H1 (cell line): ENCODE measurements at regions of chr14 and their contacts with region 1.

Region 1: DNA sequence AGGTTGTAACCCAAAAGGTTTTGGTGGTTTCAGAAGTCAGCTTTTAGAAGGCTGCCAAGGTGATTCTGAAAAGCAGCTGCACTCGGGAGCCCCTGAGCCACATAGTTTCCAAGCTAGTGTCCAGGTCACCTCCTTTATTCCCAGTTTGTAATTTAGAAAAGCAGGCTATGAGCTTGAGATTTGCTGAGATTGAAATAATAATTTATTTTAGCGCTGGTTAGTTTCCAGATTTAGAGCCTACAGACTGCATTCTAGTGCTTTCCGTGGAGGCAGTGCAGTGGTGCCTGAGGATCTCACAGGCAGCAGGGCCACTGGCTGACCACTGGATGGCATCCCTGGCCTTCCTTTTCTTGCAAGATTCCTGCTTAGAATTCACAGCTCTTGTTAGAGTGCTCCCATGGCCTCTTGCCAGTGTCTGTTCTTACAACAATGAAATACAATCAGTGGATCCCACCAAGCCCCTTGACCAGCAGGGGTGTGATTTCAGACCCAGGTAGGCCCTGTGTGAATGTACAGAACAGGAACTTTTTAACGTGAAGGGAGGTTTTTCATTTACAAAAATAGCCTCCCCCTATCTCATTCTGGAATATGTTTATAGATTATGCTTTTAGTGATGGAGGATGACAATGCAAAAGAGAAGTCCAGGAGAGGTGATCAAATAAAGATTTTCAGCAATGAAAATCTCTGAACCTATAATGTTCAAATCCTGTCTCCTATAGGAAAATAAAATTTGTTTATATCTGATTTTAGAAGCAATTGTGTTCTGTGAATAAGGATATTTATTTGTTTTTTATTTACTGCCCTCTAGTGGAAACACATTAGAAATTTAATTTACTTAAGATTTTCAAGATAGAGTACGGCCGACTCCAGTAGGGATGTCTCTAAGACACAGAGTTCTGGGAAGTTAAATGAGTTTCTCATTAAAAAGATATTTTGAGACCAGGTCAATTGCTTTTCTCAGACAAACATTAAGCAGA is 362.1 kb upstream of the STXBP6 start:
- DNase-seq: peak in 1 of 2 experiments; percentile 54
- H3K4me3 ChIP-seq: no peak overlapping the region
- H3K27ac ChIP-seq: no peak overlapping the region
- H3K4me1 ChIP-seq: no peaks in the 10 kb centered on the region
- H3K27me3 ChIP-seq: no peaks in the 10 kb centered on the region
- CTCF ChIP-seq: peak; percentile 71 to 86 (median 85)
- EP300 ChIP-seq: no peak
- POLR2A ChIP-seq: no peak
- RAD21 ChIP-seq: peak; percentile 76 to 85

Region 2: DNA sequence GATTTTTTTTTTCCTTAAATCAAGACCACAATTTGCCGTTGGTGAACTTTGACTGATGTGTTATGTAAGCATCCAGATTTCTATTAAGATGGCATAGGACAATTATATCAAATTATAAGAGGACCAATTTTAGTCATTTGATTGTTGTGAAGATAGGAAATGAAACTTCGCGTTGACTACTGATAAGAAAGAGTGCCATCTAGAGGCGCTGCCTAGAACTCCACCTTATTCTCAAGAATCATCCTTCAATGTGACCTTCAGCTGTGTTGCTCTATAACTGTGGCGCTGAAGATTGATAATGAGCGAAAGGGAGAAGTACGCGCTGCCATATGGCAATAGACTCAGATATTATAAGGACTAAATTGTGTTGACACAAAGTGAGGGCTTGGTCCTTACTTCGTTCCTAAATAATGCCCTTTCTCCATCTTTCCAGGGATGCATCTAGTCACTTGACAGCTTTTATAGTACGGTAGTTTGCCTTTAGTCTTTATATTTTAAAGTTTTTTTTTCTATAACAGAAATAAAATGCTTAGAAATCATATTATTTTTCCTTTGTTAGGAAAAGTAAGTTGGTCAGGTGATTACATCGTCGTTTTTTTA is 11.4 kb before region 1 on chr14:
- CTCF ChIA-PET with region 1: interaction called, 65 read pairs
- POLR2A ChIA-PET with region 1: no interaction called
- DNase-seq: peak in 1 of 2 experiments; percentile 72
- H3K4me3 ChIP-seq: no peak overlapping the region
- H3K27ac ChIP-seq: no peak overlapping the region
- H3K4me1 ChIP-seq: no peaks in the 10 kb centered on the region
- H3K27me3 ChIP-seq: no peaks in the 10 kb centered on the region
- CTCF ChIP-seq: peak in 2 of 3 experiments; percentile 54 to 70; a peak in 3 of 4 replicates
- EP300 ChIP-seq: no peak
- POLR2A ChIP-seq: no peak
- RAD21 ChIP-seq: peak; percentile 60 to 65

Region 3: DNA sequence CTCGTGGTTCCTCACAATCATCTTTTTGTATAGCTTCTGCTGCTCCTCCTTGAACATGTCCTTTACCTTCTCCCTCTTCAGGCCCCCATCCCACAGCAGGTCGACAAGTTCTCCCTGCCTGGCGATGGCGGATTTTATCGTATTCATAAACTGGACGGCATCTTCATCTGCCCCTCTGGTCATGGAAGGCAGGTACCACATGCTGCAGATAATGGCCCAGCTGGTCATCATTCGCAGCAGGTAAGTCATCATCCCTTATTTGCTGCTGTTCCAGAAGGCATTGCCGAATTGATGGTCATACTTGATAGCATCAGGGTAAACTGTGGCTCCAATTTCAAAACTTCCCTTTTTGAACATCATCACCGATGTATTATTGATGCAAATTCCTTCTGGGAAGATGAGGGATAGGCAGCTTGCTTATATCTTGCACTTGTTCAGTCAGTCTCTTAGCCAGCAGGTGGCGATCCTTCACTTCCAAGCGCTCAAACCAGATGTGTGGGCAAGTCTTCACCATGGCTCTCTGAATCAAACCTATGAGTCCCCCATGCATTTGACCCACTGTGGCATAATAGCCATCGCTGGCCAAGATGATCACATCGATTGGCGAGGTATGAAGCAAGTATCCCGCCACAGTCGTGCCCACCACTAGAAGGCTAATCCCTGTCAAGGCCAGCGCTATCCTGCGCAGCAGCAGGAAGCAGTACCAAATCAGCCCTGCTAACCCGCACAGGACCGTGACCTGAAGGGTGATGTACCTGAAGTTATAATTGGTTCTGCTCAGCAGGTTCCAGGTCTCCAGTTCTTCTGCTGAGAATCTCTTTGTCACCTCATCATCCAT is 19.4 kb after region 1 on chr14:
- CTCF ChIA-PET with region 1: interaction called, 15 read pairs
- POLR2A ChIA-PET with region 1: no interaction called
- DNase-seq: peak; percentile 15 to 65
- H3K4me3 ChIP-seq: no peak overlapping the region
- H3K27ac ChIP-seq: no peak overlapping the region
- H3K4me1 ChIP-seq: no peaks in the 10 kb centered on the region
- H3K27me3 ChIP-seq: no peaks in the 10 kb centered on the region
- CTCF ChIP-seq: peak; percentile 43 to 69 (median 61)
- EP300 ChIP-seq: no peak
- POLR2A ChIP-seq: no peak
- RAD21 ChIP-seq: peak; percentile 72 to 78

Region 4: GRCh38 chr14:25444381-25444780 is 32.3 kb after region 1 on chr14:
- CTCF ChIA-PET with region 1: no interaction called
- POLR2A ChIA-PET with region 1: no interaction called
- DNase-seq: no peak
- H3K4me3 ChIP-seq: no peak overlapping the region
- H3K27ac ChIP-seq: no peak overlapping the region
- H3K4me1 ChIP-seq: no peaks in the 10 kb centered on the region
- H3K27me3 ChIP-seq: no peaks in the 10 kb centered on the region
- CTCF ChIP-seq: no peak
- EP300 ChIP-seq: no peak
- POLR2A ChIP-seq: no peak
- RAD21 ChIP-seq: no peak

Region 5: DNA sequence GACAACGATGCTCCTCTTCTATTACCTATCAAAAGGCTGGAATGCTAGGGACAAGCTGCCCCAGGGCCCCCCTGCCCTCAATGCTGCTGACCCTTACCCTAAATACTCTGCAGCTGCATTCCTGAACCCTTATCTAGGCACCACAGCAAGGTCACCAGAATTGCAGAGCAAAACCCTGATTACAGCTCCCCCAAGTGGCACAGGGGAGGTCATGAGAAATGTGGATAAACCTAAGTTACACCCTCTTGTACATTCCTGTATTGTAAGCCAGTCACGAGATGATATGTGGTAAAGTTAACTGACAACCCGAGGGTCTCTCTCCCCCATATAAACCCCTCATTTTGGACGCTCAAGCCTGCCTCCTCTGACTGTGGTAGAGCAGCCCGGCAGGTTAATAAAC is 49.7 kb after region 1 on chr14:
- CTCF ChIA-PET with region 1: interaction called, 10 read pairs
- POLR2A ChIA-PET with region 1: no interaction called
- DNase-seq: no peak
- H3K4me3 ChIP-seq: no peak overlapping the region
- H3K27ac ChIP-seq: no peak overlapping the region
- H3K4me1 ChIP-seq: no peaks in the 10 kb centered on the region; a peak in 1 of 7 replicates
- H3K27me3 ChIP-seq: no peaks in the 10 kb centered on the region
- CTCF ChIP-seq: peak in 2 of 3 experiments; percentile 10 to 51; a peak in 2 of 4 replicates
- EP300 ChIP-seq: no peak
- POLR2A ChIP-seq: no peak
- RAD21 ChIP-seq: peak; percentile 25 to 33; a peak in 2 of 4 replicates

Region 6: GRCh38 chr14:25472700-25473099 is 60.6 kb after region 1 on chr14:
- CTCF ChIA-PET with region 1: no interaction called
- POLR2A ChIA-PET with region 1: no interaction called
- DNase-seq: no peak
- H3K4me3 ChIP-seq: no peak overlapping the region
- H3K27ac ChIP-seq: no peak overlapping the region
- H3K4me1 ChIP-seq: no peaks in the 10 kb centered on the region
- H3K27me3 ChIP-seq: no peaks in the 10 kb centered on the region
- CTCF ChIP-seq: no peak
- EP300 ChIP-seq: no peak
- POLR2A ChIP-seq: no peak
- RAD21 ChIP-seq: no peak

Region 7: DNA sequence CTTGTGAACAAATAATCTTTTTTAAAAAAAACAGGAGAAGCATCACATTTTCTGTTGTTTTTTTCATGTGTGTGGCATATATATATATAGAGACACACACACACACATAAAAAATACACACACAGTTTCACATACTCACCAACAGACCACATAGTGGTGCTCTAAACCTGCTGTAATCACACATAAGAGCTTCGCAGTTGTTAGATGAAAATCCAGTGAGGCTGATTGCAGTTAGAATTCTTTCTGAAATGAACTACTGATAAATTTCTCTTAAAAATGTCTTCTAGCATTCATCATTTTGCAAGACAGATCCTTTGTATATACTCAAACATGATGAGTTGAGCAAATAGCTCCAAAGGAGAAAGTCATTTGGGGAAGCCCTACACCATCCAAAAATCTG is 72.2 kb after region 1 on chr14:
- CTCF ChIA-PET with region 1: interaction called, 10 read pairs
- POLR2A ChIA-PET with region 1: no interaction called
- DNase-seq: no peak
- H3K4me3 ChIP-seq: no peak overlapping the region
- H3K27ac ChIP-seq: no peak overlapping the region
- H3K4me1 ChIP-seq: no peaks in the 10 kb centered on the region
- H3K27me3 ChIP-seq: no peaks in the 10 kb centered on the region
- CTCF ChIP-seq: no peak
- EP300 ChIP-seq: no peak
- POLR2A ChIP-seq: no peak
- RAD21 ChIP-seq: peak; percentile 36 to 47

Region 8: GRCh38 chr14:25537846-25538455 is 125.9 kb after region 1 on chr14:
- CTCF ChIA-PET with region 1: interaction called, 20 read pairs
- POLR2A ChIA-PET with region 1: no interaction called
- DNase-seq: peak; percentile 31 to 75
- H3K4me3 ChIP-seq: no peak overlapping the region
- H3K27ac ChIP-seq: no peak overlapping the region
- H3K4me1 ChIP-seq: no peaks in the 10 kb centered on the region
- H3K27me3 ChIP-seq: no peaks in the 10 kb centered on the region
- CTCF ChIP-seq: peak; percentile 34 to 81 (median 73)
- EP300 ChIP-seq: no peak
- POLR2A ChIP-seq: no peak
- RAD21 ChIP-seq: peak; percentile 78 to 87